PC-9 (cell line): ENCODE measurements at regions of chr14 and their contacts with region 1.

Region 1: DNA sequence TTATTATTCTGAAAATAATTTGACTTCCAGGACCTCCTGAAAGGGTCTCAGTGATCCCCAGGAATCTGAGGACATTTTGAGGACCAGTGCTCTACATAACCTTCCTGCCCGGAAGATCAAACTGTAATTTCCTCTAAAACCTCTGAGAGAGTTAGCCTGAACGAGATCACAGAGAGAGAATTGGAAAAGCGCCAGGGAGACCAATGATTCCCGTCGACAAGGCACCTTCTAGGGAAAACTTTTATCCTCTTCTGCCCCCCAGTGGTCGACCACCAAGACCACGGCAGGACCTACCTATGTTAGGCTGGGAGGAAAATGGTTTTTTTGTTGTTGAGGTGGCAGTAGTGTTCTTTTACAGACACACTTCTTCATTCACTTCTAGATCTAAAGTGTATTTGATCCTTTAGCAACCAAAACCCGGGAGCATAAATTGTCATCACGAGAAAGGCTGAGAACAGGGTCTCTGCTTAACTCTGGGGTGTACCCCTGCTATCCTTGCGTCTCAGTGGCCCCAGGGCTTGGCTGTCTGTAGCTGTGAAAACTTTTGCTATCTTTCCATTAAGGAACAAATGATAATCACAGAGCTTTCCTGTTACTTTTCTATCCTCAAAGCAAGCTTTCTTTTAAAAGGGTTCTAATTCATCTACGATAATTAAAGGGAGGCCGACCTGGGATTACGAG is 62.9 kb upstream of the NID2 start:
- DNase-seq: peak; percentile 52 to 78
- H3K4me3 ChIP-seq: no peak overlapping the region
- H3K27ac ChIP-seq: no peak overlapping the region
- H3K4me1 ChIP-seq: no peaks in the 10 kb centered on the region; the same call in 1 of the 2 replicates
- H3K27me3 ChIP-seq: no peaks in the 10 kb centered on the region
- CTCF ChIP-seq: peak; percentile 75

Region 2: GRCh38 chr14:50823051-50823761 is 1308.6 kb before region 1 on chr14:
- CTCF ChIA-PET with region 1: interaction called, 12 read pairs
- POLR2A ChIA-PET with region 1: no interaction called
- intact Hi-C with region 1: no loop called
- DNase-seq: no peak
- H3K4me3 ChIP-seq: no peak overlapping the region
- H3K27ac ChIP-seq: no peak overlapping the region
- H3K4me1 ChIP-seq: no peaks in the 10 kb centered on the region
- H3K27me3 ChIP-seq: no peaks in the 10 kb centered on the region
- CTCF ChIP-seq: no peak

Region 3: GRCh38 chr14:51996148-51996746 is 135.5 kb before region 1 on chr14:
- CTCF ChIA-PET with region 1: interaction called, 5 read pairs
- POLR2A ChIA-PET with region 1: no interaction called
- intact Hi-C with region 1: loop called (anchors 1 kb)
- DNase-seq: no peak
- H3K4me3 ChIP-seq: no peak overlapping the region
- H3K27ac ChIP-seq: no peak overlapping the region
- H3K4me1 ChIP-seq: peaks cover under 1% of the 10 kb centered on the region; the same call in 1 of the 2 replicates
- H3K27me3 ChIP-seq: no peaks in the 10 kb centered on the region
- CTCF ChIP-seq: peak; percentile 86

Region 4: DNA sequence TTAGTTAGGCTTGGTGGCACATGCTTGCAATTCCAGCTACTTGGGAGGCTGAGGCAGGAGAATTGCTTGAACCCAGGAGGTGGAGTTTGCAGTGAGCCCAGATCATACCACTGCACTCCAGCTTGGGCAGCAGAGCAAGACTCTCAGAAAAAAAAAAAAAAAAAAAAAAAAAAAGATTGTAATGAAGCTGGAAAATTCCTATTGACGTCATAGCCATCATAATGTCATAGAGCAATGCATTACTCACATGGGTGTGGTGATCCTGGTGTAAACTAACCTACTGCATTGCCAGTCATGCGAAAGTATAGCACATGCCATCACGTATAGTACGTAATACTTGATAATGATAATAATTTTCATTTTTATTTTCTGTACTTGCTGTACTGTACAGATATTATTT is 20.2 kb before region 1 on chr14:
- CTCF ChIA-PET with region 1: no interaction called
- POLR2A ChIA-PET with region 1: no interaction called
- intact Hi-C with region 1: no loop called
- DNase-seq: peak in 1 of 2 experiments; percentile 56
- H3K4me3 ChIP-seq: no peak overlapping the region
- H3K27ac ChIP-seq: peak overlapping the region; percentile 77
- H3K4me1 ChIP-seq: peaks cover 6% of the 10 kb centered on the region; the same call in 1 of the 2 replicates
- H3K27me3 ChIP-seq: no peaks in the 10 kb centered on the region
- CTCF ChIP-seq: no peak

Region 5: DNA sequence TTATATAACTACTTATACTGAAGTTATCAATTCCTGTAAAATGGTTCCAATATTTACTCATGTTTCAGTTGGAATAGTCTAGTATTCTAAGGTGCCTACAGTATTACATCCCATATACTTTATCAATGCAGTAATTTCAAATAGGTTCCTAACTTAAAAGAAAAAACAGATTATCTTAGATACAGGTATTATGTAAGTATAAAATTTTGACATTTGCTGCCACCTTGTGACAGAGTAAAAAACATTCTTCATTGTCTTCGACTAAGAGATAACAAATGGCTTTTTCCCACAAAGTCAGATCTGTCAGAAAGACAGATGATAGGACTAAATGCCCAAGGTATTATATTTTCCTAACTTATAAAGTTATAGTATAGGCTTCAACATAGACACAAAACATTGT is 341.8 kb after region 1 on chr14:
- CTCF ChIA-PET with region 1: no interaction called
- POLR2A ChIA-PET with region 1: no interaction called
- intact Hi-C with region 1: loop called (anchors 10 kb)
- DNase-seq: peak in 1 of 2 experiments; percentile 41
- H3K4me3 ChIP-seq: no peak overlapping the region
- H3K27ac ChIP-seq: no peak overlapping the region
- H3K4me1 ChIP-seq: no peaks in the 10 kb centered on the region
- H3K27me3 ChIP-seq: no peaks in the 10 kb centered on the region
- CTCF ChIP-seq: peak; percentile 69